Common myeloid progenitor, CD34-positive (primary cell): ENCODE measurements at regions of chr4 and their contacts with region 1.

Region 1: GRCh38 chr4:152500800-152501434 is 35.0 kb downstream of the FBXW7 start:
- DNase-seq: peak; percentile 90 to 95 (median 92)
- H3K4me3 ChIP-seq: no peak overlapping the region
- H3K27ac ChIP-seq: no peak overlapping the region
- H3K4me1 ChIP-seq: peaks cover 0 to 7% (median 1%) of the 10 kb centered on the region in 4 experiments
- H3K27me3 ChIP-seq: no peaks in the 10 kb centered on the region

Region 2: DNA sequence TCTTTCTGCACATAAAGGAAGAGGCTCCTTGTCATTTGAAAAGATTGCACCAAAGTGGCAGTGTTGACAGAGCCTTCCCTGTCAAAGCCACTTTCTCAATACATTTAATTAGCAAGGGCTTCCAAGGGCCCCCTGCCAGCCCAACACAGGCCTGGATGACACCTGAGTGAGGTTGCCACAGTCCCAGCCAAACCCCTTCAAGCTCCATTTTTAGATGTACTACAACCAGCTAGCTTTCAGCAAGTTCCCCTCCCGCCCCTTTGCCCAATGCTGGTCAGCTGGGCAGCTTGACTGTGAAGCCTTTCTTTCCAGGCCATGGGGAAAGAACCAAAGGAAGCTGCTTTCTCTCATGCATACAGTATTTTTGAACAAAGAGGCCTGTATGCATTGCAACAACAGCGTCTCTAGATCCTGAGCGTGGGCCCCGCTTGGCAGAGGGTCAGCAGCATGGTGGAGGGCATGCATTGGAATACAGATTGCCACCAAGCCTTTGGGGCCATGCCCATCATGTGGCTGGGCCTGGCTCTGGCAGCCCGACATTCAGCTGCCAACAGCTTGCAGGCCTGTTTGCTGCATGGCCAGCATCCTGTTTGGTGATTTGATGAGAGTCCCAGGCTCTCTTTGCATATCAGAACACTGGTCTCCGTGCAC is 479.0 kb before region 1 on chr4:
- CTCF ChIA-PET with region 1: no interaction called
- POLR2A ChIA-PET with region 1: no interaction called
- DNase-seq: no peak
- H3K4me3 ChIP-seq: no peak overlapping the region
- H3K27ac ChIP-seq: no peak overlapping the region
- H3K4me1 ChIP-seq: no peaks in the 10 kb centered on the region
- H3K27me3 ChIP-seq: peaks cover 0 to 5% (median 0%) of the 10 kb centered on the region in 5 experiments

Region 3: GRCh38 chr4:152229782-152230289 is 271.1 kb before region 1 on chr4:
- CTCF ChIA-PET with region 1: no interaction called
- POLR2A ChIA-PET with region 1: no interaction called
- DNase-seq: no peak
- H3K4me3 ChIP-seq: no peak overlapping the region
- H3K27ac ChIP-seq: no peak overlapping the region
- H3K4me1 ChIP-seq: no peaks in the 10 kb centered on the region
- H3K27me3 ChIP-seq: no peaks in the 10 kb centered on the region

Region 4: GRCh38 chr4:152454398-152455011 is 46.4 kb before region 1 on chr4:
- CTCF ChIA-PET with region 1: interaction called, 25 read pairs
- POLR2A ChIA-PET with region 1: no interaction called
- DNase-seq: peak; percentile 27 to 52 (median 51)
- H3K4me3 ChIP-seq: no peak overlapping the region
- H3K27ac ChIP-seq: no peak overlapping the region
- H3K4me1 ChIP-seq: peaks cover 4 to 14% (median 10%) of the 10 kb centered on the region in 4 experiments
- H3K27me3 ChIP-seq: no peaks in the 10 kb centered on the region

Region 5: GRCh38 chr4:152535903-152536544 is 35.1 kb after region 1 on chr4 and contains the start of gene FBXW7:
- CTCF ChIA-PET with region 1: interaction called, 11 read pairs
- POLR2A ChIA-PET with region 1: no interaction called
- DNase-seq: peak; percentile 99 to 100 (median 100)
- H3K4me3 ChIP-seq: peak within 1 kb of the TSS; percentile 82 to 100 (median 91)
- H3K27ac ChIP-seq: peak within 1 kb of the TSS; percentile 86 to 95
- H3K4me1 ChIP-seq: peaks cover 12 to 40% (median 24%) of the 10 kb centered on the region in 4 experiments
- H3K27me3 ChIP-seq: no peaks in the 10 kb centered on the region

Region 6: DNA sequence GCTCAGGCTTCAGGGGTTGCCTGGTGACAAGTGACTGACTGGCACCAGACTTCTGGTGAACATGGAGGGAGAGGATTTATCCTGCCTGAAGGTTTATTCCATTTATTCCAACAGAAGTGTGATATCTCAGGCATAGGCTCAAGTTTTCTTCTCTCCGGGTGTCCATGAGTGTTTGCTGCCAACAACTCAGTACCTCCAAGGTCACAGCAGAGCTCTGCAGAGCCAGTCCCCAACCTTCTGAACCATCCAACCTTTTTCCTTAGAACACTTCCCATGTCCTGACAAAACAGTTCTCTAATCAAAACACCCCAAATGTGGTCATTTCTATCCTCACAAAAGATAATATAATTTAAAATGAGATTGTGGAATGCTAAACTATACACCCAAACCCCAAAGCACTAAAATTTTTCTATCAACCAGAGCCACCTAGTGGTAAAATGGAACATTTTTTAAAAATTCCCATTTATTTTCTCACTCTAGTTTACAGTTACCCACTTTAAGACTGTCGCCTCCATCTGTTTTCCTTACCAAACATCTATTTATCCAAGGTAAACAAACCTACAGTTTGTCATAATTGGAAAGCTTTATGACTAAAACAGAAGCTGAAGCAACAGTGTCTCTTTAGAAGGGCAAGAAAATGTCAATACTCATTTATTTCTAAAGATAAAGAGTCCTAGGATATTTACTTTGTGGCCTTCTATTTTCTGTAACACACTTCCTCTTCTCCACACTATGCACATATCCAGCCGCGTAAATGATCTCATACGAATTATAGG is 139.3 kb after region 1 on chr4:
- CTCF ChIA-PET with region 1: interaction called, 182 read pairs
- POLR2A ChIA-PET with region 1: no interaction called
- DNase-seq: peak in 2 of 3 donors; percentile 14 to 26
- H3K4me3 ChIP-seq: no peak overlapping the region
- H3K27ac ChIP-seq: no peak overlapping the region
- H3K4me1 ChIP-seq: peaks cover 0 to 13% (median 5%) of the 10 kb centered on the region in 4 experiments
- H3K27me3 ChIP-seq: no peaks in the 10 kb centered on the region

Region 7: GRCh38 chr4:152735396-152735859 is 234.5 kb after region 1 on chr4:
- CTCF ChIA-PET with region 1: interaction called, 15 read pairs
- POLR2A ChIA-PET with region 1: no interaction called
- DNase-seq: peak; percentile 15 to 48 (median 32)
- H3K4me3 ChIP-seq: no peak overlapping the region
- H3K27ac ChIP-seq: no peak overlapping the region
- H3K4me1 ChIP-seq: peaks cover 0 to 3% (median 0%) of the 10 kb centered on the region in 4 experiments
- H3K27me3 ChIP-seq: no peaks in the 10 kb centered on the region